GM13976 (cell line): ENCODE measurements at regions of chr1 and their contacts with region 1.

Region 1: DNA sequence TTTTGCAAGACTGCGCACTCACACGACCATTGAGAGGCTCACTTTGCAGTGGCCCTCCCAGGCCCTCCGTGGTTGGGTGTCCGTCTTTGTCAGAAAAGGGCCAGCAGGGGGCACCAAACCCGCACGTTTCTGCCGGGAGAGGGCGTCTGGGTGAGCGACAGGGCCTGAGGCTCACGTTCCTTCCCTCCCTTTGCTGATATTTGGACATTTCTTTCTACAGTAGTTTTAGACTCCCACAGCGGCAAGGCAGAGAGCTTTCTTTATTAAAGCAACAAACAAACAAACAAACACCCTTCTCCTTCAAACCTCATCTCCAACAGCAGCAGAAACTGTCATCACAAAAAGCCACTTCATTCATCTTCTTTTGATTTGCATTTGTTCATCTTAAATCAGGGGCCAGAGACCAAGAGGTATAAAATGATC is 79.2 kb upstream of the WDR26 start:
- DNase-seq: peak; percentile 88
- CTCF ChIP-seq: peak; percentile 94

Region 2: DNA sequence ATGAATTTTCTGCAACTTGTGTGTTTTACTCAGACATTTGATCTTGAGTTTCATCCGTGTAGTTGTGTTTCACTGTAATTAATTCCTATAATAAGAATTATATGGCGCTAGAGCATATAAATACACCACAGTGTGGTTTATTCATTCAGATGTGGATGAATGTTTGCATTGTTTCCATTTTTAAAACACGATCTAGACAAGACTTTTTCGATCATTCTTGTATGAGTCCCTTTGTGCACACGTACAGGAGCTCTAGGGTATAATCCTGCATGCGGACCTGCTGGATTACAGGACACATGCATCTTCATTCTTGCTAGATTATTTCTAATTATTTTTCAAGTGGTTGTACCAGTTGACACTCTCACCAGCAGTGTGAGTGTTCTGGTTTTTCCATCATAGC is 55.5 kb after region 1 on chr1:
- in situ Hi-C with region 1: no loop called
- DNase-seq: no peak
- CTCF ChIP-seq: no peak

Region 3: GRCh38 chr1:224637515-224637914 is 123.7 kb after region 1 on chr1:
- in situ Hi-C with region 1: loop called (anchors 10 kb)
- DNase-seq: no peak
- CTCF ChIP-seq: no peak

Region 4: DNA sequence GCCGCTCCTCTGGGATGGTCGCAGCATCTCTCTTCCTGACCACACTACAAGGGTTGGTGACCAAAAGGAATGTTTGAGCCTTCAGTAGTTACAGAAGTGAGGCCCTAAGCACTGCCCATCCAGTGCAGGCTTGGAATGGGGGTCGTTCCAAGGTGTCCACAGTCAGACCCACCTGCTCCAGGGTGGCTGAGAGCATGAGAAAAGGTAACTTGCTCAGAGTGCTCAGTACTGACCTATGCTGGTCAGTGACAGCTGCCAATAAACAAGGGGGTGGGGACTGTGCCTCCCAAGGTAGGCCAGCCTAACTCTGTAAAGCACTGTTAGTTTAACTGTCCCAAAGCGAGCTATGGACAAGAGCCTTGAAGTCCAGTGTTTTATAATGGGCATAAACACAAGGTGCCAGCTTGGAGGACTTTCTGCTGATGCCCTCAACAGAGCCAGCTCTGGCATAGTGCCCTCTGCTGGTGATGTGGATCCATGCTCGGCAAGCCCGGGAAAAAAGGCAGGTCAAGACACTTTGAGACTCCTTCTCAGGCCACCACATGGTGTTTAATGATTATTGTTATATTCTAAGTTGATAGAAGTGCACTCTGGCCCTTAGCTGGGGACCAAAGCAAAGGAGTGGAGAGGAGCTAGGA is 337.5 kb after region 1 on chr1:
- in situ Hi-C with region 1: loop called (anchors 10 kb)
- DNase-seq: peak; percentile 71
- CTCF ChIP-seq: peak; percentile 66